ENCODE measurements at regions of chr15 and their contacts with region 1.

Region 1: DNA sequence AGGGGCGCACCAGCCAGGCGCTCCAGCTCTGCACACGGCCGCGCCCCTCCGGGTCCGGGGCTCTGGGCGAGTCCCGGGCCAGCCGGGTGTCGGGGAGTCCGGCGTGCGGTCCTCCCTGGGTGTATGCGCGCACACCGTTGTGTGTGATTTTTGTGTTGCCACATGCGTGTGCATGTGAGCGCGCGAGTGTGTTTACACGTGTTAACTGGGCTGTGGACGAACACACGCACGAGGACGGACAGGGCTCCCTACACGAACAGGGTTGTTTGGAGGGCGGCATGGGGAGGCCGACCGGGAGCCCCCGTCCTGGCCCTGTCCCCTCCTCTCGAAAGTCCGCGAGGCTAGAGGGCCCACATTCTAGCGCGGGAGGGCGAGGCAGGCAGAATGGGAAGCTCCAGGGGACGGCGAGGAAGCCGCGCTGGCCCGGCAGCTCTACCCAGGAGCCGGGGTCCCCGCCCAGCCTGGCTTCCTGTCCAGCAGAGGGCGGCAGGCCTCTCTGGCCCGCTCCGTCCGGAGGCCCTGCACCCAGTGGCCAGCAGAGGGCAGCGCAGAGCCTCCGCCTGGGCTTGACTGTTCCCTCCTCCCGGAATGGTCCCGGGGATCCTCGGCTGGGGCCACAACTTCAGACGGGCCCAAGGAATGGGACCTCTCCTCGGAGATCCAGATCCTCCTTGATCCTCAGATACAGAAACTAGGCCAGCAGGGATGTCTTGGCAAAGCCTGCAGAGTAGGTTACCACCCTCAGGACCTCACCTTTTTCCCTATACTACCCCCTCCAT is 611 bp upstream of the LINGO1 start:
- DNase-seq: peak; percentile 70
- ATAC-seq: peak; percentile 99
- H3K4me3 ChIP-seq: peak overlapping the region; percentile 34
- H3K27ac ChIP-seq: no peak overlapping the region
- H3K4me1 ChIP-seq: peaks cover 3% of the 10 kb centered on the region; the same call in 1 of the 2 replicates
- H3K27me3 ChIP-seq: peaks cover 85% of the 10 kb centered on the region
- CTCF ChIP-seq: peak; percentile 100
- POLR2A ChIP-seq: no peak
- RAD21 ChIP-seq: peak; percentile 71

Region 2: DNA sequence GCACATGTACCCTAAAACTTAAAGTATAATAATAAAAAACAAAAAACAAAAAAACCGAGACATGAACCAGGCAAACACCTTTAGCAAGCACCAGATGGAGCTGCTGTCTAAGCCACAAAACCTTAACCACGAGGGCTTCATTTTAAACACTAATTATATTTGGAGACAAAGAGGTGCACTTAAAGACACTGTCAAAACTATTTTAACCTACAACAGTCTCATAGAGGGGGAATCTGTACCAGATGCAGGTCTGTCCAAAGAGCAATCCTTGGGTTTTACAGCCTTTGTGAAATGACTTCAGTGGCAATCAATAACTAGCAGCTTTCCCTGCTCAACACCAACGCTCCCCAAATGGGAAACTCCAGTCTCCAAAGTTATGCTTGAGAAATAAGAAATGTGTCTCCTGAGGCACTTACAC is 446.7 kb before region 1 on chr15:
- CTCF ChIA-PET with region 1: no interaction called
- POLR2A ChIA-PET with region 1: no interaction called
- dilution Hi-C with region 1: no loop called
- in situ Hi-C with region 1: no loop called
- intact Hi-C with region 1: loop called (anchors 2 kb)
- DNase-seq: peak; percentile 47
- ATAC-seq: peak; percentile 55; the same call in 1 of the 2 replicates
- H3K4me3 ChIP-seq: no peak overlapping the region
- H3K27ac ChIP-seq: no peak overlapping the region
- H3K4me1 ChIP-seq: peaks cover 3% of the 10 kb centered on the region
- H3K27me3 ChIP-seq: no peaks in the 10 kb centered on the region
- CTCF ChIP-seq: peak; percentile 62
- POLR2A ChIP-seq: no peak
- RAD21 ChIP-seq: peak; percentile 66

Region 3: DNA sequence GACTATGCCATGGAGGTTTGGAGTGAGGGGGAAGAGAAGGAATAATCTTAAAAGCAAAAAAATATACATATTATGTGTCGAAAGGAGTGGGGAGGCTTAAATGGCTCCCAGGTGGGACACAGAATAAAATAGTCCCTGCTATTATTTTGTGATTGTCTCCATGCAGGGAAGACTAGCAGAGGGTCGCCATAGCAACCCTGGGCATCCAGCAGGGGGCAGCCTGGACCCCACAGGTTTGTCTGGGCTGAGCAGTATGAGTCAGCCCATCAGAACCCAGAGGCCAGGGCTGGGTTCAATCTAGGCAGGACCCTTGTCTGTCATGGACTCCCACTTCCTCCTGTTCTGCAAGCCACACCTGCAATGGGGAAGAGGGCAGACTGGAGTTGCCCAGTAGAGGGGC is 16.9 kb after region 1 on chr15:
- CTCF ChIA-PET with region 1: no interaction called
- POLR2A ChIA-PET with region 1: no interaction called
- dilution Hi-C with region 1: no loop called
- in situ Hi-C with region 1: no loop called
- intact Hi-C with region 1: no loop called
- DNase-seq: no peak
- ATAC-seq: no peak
- H3K4me3 ChIP-seq: no peak overlapping the region
- H3K27ac ChIP-seq: no peak overlapping the region
- H3K4me1 ChIP-seq: no peaks in the 10 kb centered on the region
- H3K27me3 ChIP-seq: peaks cover 55% of the 10 kb centered on the region
- CTCF ChIP-seq: peak; percentile 21; the same call in 1 of the 2 replicates
- POLR2A ChIP-seq: no peak
- RAD21 ChIP-seq: no peak

Region 4: DNA sequence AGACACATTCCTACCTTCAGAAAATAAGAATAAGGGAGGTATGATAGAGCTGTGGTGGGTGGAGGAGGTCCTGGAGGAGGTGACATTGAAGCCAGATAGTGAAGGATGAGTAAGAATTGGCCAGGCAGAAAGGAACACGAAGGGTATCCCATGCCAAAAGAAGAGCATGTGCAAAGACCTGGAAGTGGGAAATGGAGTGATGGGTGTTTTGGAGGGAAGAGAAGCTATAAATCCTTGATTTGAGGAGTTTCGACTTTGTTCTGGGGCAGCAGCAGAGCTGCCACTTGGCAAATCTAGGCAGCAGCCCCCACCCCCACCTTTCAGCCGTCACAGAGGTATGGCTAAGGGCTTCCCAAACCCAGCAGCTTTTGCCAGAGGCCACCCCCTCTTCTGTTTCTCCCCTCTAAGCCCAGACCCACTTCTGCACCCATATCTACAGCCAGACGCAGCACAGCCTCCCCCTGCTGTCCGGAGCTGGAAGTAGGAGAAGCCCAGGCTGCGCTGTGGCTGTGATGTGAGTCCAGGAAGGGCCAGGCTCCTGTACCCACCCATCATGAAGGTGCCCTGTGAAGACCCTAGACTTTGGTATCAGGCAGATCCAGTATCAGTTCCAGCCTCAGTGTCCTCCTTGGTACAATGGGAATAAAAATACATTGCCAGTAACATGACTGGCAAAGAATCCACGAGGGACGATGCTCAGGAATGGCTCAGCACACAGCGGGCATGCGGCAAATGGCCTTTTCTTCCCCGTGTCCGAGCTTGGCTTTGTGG is 188.1 kb after region 1 on chr15:
- CTCF ChIA-PET with region 1: interaction called, 19 read pairs
- POLR2A ChIA-PET with region 1: no interaction called
- dilution Hi-C with region 1: no loop called
- in situ Hi-C with region 1: no loop called
- intact Hi-C with region 1: loop called (anchors 1 kb)
- DNase-seq: peak; percentile 47
- ATAC-seq: peak; percentile 94
- H3K4me3 ChIP-seq: no peak overlapping the region
- H3K27ac ChIP-seq: no peak overlapping the region
- H3K4me1 ChIP-seq: no peaks in the 10 kb centered on the region
- H3K27me3 ChIP-seq: peaks cover 83% of the 10 kb centered on the region
- CTCF ChIP-seq: peak; percentile 73
- POLR2A ChIP-seq: no peak
- RAD21 ChIP-seq: peak; percentile 72

Region 5: GRCh38 chr15:77870195-77871065 is 237.1 kb after region 1 on chr15:
- CTCF ChIA-PET with region 1: interaction called, 4 read pairs
- POLR2A ChIA-PET with region 1: no interaction called
- dilution Hi-C with region 1: no loop called
- in situ Hi-C with region 1: no loop called
- intact Hi-C with region 1: loop called (anchors 1 kb)
- DNase-seq: peak; percentile 53
- ATAC-seq: peak; percentile 96
- H3K4me3 ChIP-seq: no peak overlapping the region
- H3K27ac ChIP-seq: no peak overlapping the region
- H3K4me1 ChIP-seq: no peaks in the 10 kb centered on the region
- H3K27me3 ChIP-seq: peaks cover 5% of the 10 kb centered on the region
- CTCF ChIP-seq: peak; percentile 63
- POLR2A ChIP-seq: no peak
- RAD21 ChIP-seq: peak; percentile 46

Measured in IMR-90 (cell line).